ENCODE measurements at regions of chr2 and their contacts with region 1.

Region 1: DNA sequence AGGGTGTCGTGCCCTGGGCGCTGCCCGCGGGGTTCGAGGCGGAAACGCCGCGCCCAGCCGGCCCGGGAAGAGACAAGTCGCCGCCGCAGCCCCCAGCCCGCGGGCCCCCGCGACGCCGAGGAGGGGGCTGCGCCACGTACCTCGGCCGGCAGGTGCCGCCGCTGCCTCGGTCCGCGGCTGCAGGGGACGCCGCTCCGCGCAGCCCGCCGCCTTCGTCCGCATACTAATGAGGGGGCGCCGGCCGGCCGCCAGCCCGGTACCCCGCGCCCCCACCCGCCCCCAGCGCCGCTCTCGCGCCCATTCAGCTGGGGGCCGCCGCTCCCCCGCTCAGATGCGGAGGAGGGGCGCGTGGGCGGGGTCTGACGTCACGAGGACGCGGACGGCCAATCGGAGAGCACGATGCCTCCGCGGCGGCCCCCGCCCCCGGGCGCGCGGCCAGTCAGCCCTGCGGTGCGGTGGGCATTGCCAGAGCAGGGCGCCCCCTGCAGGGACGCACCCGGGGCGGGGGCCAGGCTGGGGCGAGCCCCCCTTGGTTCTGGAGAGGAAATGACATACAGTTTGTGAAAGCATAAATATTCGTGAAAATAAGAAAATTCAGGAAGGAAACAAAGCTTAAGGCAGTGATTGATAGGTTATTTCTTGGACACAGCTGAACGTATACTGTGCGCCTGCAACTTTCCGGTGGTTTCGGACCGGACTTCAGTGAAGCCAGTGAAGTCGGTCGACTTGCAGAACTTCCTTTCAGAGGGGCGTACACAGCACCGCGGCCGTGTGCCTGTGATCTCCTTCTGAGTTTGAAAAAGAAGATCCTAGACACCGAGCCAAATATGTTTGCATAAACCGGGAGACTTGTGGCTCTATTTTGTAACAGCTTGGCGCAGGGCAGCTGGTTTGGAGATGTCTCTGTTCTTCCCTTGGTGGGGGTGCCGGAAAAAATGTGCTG is at the start of gene ST3GAL5:
- DNase-seq: peak; percentile 90
- H3K4me3 Mint-ChIP-seq: peak within 1 kb of the TSS; percentile 88
- H3K27ac Mint-ChIP-seq: peak within 1 kb of the TSS; percentile 87
- H3K4me1 Mint-ChIP-seq: peaks cover 73% of the 10 kb centered on the region
- H3K27me3 Mint-ChIP-seq: no peaks in the 10 kb centered on the region
- total RNA-seq, gene ST3GAL5: 17.4 and 18.9 TPM in 2 replicates

Region 2: DNA sequence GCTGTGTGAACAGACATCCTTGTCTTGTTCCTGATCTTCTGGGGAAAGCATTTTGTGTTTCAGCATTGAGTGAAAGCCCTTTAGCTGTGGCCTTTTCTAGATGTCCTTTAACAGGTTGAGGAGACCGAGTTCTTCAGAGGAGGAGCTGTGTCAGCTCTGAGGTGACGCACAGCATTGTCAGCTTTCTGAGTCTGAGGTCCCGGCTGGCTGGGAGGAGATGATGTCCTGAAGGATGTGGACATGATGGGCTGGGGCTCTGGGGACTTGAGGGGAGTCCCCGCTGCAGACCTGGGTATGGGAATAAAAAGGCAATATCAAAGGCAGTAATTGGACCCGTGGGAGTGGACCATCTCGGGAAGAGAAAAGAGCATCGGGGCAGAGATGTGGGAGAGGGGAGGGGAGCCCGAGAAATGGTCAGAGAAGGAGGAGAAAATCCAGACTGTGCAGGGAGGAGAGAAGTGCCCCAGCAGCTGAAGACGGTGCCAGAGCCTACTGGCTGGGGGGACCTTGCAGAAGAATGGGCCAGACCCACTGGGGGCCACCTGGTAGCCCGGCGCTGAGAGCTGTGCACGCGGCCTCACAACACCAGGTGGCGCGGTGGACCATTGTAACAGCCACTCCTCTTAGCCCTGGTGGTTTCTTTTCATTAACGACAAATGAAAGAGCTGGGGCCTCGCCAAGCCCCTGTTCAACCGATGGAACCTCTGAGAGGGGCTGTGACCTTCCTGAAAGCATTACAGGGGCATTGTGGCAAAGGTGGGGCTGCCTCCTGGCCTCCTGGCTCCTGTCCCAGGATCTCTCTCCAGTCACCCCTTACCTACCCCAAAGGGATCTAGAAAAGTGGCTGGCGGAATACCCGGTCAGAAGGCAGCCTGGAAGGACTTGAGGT is 61.7 kb before region 1 on chr2:
- intact Hi-C with region 1: loop called (anchors 1 kb)
- DNase-seq: peak; percentile 70
- H3K4me3 Mint-ChIP-seq: no peak overlapping the region
- H3K27ac Mint-ChIP-seq: no peak overlapping the region
- H3K4me1 Mint-ChIP-seq: peaks cover 40% of the 10 kb centered on the region
- H3K27me3 Mint-ChIP-seq: peaks cover 12% of the 10 kb centered on the region

Region 3: DNA sequence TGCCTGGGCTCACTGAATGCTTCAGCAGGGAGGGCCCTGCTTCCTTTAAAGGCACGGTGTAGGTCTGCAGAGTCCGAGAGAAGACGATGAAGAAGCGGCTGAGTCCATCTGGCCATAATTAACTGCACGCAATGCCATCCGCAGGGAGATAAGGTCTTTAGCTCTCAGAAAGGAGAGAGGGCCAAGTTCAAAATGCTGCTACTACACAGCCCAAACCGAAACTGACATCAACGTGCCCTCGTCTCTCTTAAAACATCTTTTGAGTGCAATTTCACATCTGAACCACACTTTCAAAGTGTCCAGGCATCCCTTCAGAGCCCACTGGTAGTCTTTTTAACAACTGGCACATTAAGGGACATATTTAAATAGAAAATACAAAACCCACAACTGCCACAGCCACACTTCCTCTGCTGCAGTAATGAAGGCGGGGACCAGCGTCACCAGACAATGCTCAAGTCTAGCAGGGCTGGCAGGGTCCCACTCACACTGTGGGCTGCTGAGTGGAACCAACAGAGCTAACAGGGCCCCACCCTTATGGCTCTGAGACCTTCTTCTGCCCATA is 35.9 kb before region 1 on chr2:
- intact Hi-C with region 1: loop called (anchors 1 kb)
- DNase-seq: peak; percentile 46
- H3K4me3 Mint-ChIP-seq: peak overlapping the region; percentile 82
- H3K27ac Mint-ChIP-seq: peak overlapping the region; percentile 99
- H3K4me1 Mint-ChIP-seq: peaks cover 58% of the 10 kb centered on the region
- H3K27me3 Mint-ChIP-seq: no peaks in the 10 kb centered on the region

Region 4: GRCh38 chr2:85865539-85866164 is 23.3 kb before region 1 on chr2:
- intact Hi-C with region 1: loop called (anchors 1 kb)
- DNase-seq: no peak
- H3K4me3 Mint-ChIP-seq: no peak overlapping the region
- H3K27ac Mint-ChIP-seq: peak overlapping the region; percentile 35
- H3K4me1 Mint-ChIP-seq: peaks cover 49% of the 10 kb centered on the region
- H3K27me3 Mint-ChIP-seq: no peaks in the 10 kb centered on the region

Region 5: DNA sequence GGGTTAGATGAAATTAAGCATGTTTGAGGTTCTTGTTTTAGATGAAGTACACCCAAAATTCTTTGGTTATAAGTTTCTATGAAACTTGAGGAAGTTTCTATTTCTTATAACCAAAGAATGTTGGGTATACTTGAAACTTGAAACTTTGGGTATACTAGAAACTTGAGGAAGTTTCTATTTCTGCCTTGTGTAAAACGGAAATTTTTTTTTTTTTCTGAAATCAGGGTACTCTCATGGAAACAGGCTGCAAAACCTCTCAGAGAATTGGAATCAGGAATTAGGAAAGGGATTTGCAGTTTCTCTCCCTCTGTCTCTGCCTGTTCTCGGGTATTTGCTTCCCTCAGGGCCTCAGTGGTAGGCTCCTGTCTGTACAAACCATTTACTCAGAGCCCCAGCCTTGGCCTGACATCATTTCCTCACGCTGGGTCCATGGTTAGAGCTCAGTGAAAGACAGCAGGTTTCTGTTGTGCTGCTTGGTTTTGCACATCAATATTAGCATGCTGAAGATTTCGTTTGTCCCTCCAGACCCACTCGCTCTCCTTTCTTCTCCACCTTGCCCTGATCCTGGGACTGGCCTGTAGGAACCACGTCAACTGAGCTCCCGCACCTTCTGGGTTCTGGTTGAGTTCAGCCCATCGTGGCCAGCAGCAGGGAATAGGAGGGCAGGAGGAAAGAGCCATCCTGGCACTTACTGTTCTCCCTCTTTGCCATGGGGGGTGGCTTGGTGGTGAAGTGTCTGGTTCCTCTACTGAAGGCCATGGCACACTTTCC is 110.3 kb after region 1 on chr2:
- intact Hi-C with region 1: loop called (anchors 2 kb)
- DNase-seq: peak; percentile 50
- H3K4me3 Mint-ChIP-seq: peak overlapping the region; percentile 50
- H3K27ac Mint-ChIP-seq: peak overlapping the region; percentile 84
- H3K4me1 Mint-ChIP-seq: peaks cover 74% of the 10 kb centered on the region
- H3K27me3 Mint-ChIP-seq: peaks cover 2% of the 10 kb centered on the region

Region 6: DNA sequence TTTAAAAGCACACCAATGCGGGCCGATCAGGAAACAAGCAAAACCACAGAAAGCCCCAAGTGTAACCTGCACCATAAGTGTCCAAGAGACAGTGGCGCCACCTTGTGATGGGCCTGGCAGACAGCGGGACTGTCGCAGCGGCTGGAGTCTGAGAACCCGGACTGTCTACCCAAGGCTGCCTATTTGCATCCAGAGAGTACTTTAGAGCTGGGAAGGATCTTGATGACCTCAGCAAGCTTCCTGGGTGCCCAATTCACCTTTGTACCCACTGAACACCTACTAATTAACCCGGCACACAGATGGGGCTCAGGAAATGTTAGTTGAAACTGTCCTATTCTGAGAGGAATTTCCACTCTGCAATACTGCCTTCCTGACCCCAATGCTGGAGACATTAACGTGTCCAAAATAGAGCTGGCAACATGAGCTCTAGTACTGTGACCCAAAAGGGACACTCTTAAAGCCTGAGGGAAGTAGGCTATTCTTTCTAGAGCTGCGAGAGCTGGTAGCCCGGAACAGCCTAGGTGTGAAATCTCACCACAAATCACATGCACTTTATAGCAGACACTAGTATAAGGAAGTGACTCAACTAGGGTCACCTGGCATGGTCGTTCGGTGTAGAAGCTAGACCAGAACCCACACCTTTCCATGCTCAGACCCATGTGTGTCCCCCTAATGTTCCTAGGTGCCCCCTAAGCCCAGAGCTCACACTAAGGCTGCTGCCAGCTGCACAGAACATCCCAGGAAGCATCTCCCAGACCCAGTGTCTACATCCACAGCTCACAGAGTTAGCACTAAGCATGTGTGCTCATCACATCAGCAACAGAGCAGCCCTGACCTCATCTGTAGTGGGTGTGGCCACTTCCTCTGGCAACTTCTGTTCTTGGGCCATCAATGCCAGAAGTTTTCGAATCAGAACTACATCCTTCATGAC is 191.3 kb after region 1 on chr2:
- intact Hi-C with region 1: loop called (anchors 1 kb)
- DNase-seq: peak; percentile 73
- H3K4me3 Mint-ChIP-seq: no peak overlapping the region
- H3K27ac Mint-ChIP-seq: peak overlapping the region; percentile 71
- H3K4me1 Mint-ChIP-seq: peaks cover 47% of the 10 kb centered on the region
- H3K27me3 Mint-ChIP-seq: no peaks in the 10 kb centered on the region

Region 7: GRCh38 chr2:86105252-86105968 is 216.5 kb after region 1 on chr2 and contains the start of gene POLR1A:
- intact Hi-C with region 1: loop called (anchors 1 kb)
- DNase-seq: peak; percentile 84
- H3K4me3 Mint-ChIP-seq: peak within 1 kb of the TSS; percentile 91
- H3K27ac Mint-ChIP-seq: peak within 1 kb of the TSS; percentile 99
- H3K4me1 Mint-ChIP-seq: peaks cover 55% of the 10 kb centered on the region
- H3K27me3 Mint-ChIP-seq: no peaks in the 10 kb centered on the region
- total RNA-seq, gene POLR1A: 69.7 and 74.6 TPM in 2 replicates

Measured in activated T-helper 1 cell treated with anti-CD3 and anti-CD28 coated beads, Interleukin-12 subunit alpha, Interleukin-12 subunit beta, Interleukin-2, Interleukin-4 antibody, amounts not matched to agents 30 ng/mL and 10 ng/mL and 1 ng/mL, durations not matched to agents 14 hours and 24 hours and 36 hours (primary cell).